Lower lobe of right lung (tissue), 2 donors: ENCODE measurements at regions of chr3 and their contacts with region 1.

Region 1: GRCh38 chr3:139111392-139112229 is 66.9 kb upstream of the PRR23C start:
- DNase-seq: peak; percentile 62
- ATAC-seq: peak; percentile 83 to 86
- H3K4me3 ChIP-seq: no peak overlapping the region
- H3K27ac ChIP-seq: no peak overlapping the region
- H3K4me1 ChIP-seq: no peaks in the 10 kb centered on the region
- H3K27me3 ChIP-seq: peaks cover 7% of the 10 kb centered on the region
- CTCF ChIP-seq: peak; percentile 68

Region 2: GRCh38 chr3:139329345-139329850 is 217.8 kb after region 1 on chr3:
- intact Hi-C with region 1: loop called (anchors 5 kb)
- DNase-seq: peak; percentile 92
- ATAC-seq: peak; percentile 98 to 99
- H3K4me3 ChIP-seq: peak overlapping the region; percentile 17
- H3K27ac ChIP-seq: no peak overlapping the region
- H3K4me1 ChIP-seq: peaks cover 6% of the 10 kb centered on the region
- H3K27me3 ChIP-seq: peaks cover 26% of the 10 kb centered on the region
- CTCF ChIP-seq: peak; percentile 99

Region 3: GRCh38 chr3:139574026-139574947 is 462.7 kb after region 1 on chr3:
- intact Hi-C with region 1: no loop called
- DNase-seq: no peak
- ATAC-seq: no peak
- H3K4me3 ChIP-seq: no peak overlapping the region
- H3K27ac ChIP-seq: no peak overlapping the region
- H3K4me1 ChIP-seq: peaks cover 26% of the 10 kb centered on the region
- H3K27me3 ChIP-seq: no peaks in the 10 kb centered on the region
- CTCF ChIP-seq: no peak